SK-N-SH (cell line): ENCODE measurements at regions of chr11 and their contacts with region 1.

Region 1: GRCh38 chr11:111586388-111586831 is 15.8 kb upstream of the SIK2 start:
- DNase-seq: peak; percentile 27
- H3K4me3 ChIP-seq: no peak overlapping the region
- H3K27ac ChIP-seq: no peak overlapping the region
- H3K4me1 ChIP-seq: peaks cover 5 to 14% of the 10 kb centered on the region in 2 experiments; a peak in 3 of 4 replicates
- H3K27me3 ChIP-seq: no peaks in the 10 kb centered on the region
- CTCF ChIP-seq: peak; percentile 74
- EP300 ChIP-seq: no peak
- RAD21 ChIP-seq: peak; percentile 78

Region 2: DNA sequence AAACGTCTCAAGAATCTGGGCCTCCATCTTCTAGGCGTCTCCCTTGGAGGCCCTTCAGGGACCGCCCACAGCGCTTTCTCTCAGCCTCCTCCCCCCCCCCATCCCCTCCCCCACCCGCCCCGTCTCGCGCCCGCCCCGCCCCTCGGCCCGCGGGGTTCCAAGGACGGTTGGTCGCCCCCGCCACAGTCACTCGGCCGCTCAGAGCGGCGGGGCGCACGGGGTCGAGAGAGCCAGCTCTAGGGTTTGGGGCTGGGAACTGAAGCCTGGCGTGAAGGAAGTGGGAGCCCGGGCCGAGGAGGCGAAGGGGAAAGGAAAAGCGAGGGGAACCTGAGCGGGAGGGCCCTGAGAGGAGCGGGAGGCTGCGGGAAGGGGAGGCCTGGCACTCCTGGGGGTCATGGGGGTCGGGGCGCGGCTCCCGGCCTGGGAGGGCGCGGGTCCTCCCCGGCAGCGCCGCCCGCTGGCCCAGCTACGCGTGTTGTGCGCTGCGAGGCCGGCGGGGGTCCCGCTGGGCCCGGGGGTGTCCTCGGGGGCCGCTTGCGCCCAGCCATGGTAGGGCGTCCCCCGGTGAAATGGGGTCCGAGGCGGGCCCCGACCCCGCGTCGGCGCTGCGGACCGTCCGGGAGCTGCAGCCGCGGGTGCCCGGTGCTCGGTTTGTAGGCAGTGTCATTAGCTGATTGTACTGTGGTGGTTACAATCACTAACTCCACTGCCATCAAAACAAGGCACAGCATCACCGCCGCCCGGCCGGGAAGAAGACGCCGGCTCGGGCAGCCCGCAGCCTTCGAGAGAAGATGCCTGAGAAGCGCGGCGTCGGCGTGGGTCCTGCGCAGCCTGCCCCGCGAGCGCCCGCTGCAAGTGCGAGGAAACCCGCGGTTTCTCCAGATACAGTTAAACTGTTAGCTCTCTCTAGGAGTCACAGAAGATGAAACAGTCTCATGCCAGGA is 73.8 kb before region 1 on chr11 and contains the start of gene BTG4:
- CTCF ChIA-PET with region 1: no interaction called
- POLR2A ChIA-PET with region 1: no interaction called
- DNase-seq: peak; percentile 68
- H3K4me3 ChIP-seq: peak within 1 kb of the TSS in 1 of 2 experiments; percentile 39; a peak in 3 of 4 replicates
- H3K27ac ChIP-seq: no peak within 1 kb of the TSS
- H3K4me1 ChIP-seq: peaks cover 11 to 15% of the 10 kb centered on the region in 2 experiments; a peak in 3 of 4 replicates
- H3K27me3 ChIP-seq: no peaks in the 10 kb centered on the region
- CTCF ChIP-seq: no peak
- EP300 ChIP-seq: no peak
- RAD21 ChIP-seq: no peak
- polyA plus RNA-seq, gene BTG4: 0.26 and 0.34 TPM in 2 replicates

Region 3: DNA sequence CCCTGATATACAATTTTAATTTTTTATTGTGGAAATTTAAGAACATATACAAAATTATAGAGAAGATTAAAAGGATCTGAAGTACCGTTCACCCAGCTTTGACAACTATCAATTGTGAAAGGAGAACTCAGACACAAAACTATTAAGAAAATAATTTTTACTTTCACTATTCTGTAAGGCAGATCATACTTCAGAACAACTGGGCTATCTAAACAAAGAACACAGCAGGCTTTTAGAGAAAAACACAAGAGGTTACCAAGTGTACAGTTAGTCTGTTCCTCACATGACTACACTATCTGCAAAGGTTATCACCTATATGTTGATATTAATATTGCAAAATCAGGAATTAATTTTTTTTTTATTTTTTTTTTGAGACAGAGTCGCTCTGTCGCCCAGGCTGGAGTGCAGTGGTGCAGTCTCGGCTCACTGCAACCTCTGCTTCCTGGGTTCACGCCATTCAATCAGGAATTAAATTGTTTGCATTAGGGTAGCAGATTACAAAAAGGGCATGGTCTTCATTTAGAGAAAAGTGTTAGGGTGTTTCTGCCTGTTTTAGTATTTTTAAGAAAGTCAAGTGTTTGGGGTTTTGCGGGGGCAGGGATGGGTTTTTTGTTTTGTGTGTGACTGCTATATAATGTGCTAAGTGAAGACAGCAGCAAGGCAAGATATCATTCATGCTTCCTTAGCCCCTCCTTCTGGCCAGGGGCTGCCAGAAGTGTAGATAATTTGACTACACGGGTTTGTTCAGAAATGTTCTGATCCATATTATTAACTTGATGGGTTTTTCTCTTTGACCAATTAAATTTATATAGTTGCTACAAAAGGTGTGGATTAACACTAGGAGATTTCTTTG is 11.8 kb before region 1 on chr11:
- CTCF ChIA-PET with region 1: interaction called, 12 read pairs
- POLR2A ChIA-PET with region 1: no interaction called
- DNase-seq: no peak
- H3K4me3 ChIP-seq: no peak overlapping the region
- H3K27ac ChIP-seq: no peak overlapping the region
- H3K4me1 ChIP-seq: peaks cover 3 to 19% of the 10 kb centered on the region in 2 experiments; a peak in 3 of 4 replicates
- H3K27me3 ChIP-seq: no peaks in the 10 kb centered on the region
- CTCF ChIP-seq: no peak
- EP300 ChIP-seq: no peak
- RAD21 ChIP-seq: no peak

Region 4: GRCh38 chr11:111718436-111718835 is 132.0 kb after region 1 on chr11:
- CTCF ChIA-PET with region 1: no interaction called
- POLR2A ChIA-PET with region 1: no interaction called
- DNase-seq: no peak
- H3K4me3 ChIP-seq: no peak overlapping the region
- H3K27ac ChIP-seq: peak overlapping the region in 1 of 2 experiments; percentile 41; a peak in 2 of 4 replicates
- H3K4me1 ChIP-seq: peaks cover 18 to 24% of the 10 kb centered on the region in 2 experiments; a peak in 2 of 4 replicates
- H3K27me3 ChIP-seq: no peaks in the 10 kb centered on the region
- CTCF ChIP-seq: no peak
- EP300 ChIP-seq: no peak
- RAD21 ChIP-seq: no peak

Region 5: DNA sequence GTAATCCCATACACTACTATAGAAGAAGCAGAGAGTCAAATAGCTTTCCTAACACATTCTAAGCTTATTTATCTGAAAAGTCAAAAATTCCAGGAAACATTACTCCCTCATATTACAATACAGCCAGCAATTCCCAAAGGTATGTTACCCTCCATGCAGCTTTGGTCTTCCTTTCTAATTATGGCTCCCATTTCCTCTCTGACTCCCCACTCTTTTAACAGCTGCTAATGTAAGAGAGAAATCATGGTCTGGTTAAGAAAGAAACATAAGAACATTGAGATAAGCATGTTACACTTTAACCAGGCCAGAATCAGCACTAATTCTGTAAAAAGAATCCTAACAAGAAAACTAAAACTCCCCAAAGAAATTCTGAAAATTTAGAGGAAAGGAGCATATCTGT is 173.0 kb after region 1 on chr11:
- CTCF ChIA-PET with region 1: no interaction called
- POLR2A ChIA-PET with region 1: no interaction called
- DNase-seq: no peak
- H3K4me3 ChIP-seq: no peak overlapping the region
- H3K27ac ChIP-seq: no peak overlapping the region
- H3K4me1 ChIP-seq: no peaks in the 10 kb centered on the region; a peak in 1 of 4 replicates
- H3K27me3 ChIP-seq: no peaks in the 10 kb centered on the region
- CTCF ChIP-seq: no peak
- EP300 ChIP-seq: no peak
- RAD21 ChIP-seq: no peak

Region 6: GRCh38 chr11:111797145-111797581 is 210.8 kb after region 1 on chr11:
- CTCF ChIA-PET with region 1: interaction called, 11 read pairs
- POLR2A ChIA-PET with region 1: no interaction called
- DNase-seq: no peak
- H3K4me3 ChIP-seq: no peak overlapping the region
- H3K27ac ChIP-seq: peak overlapping the region; percentile 28 to 35; a peak in 3 of 4 replicates
- H3K4me1 ChIP-seq: peaks cover 18 to 26% of the 10 kb centered on the region in 2 experiments; a peak in 3 of 4 replicates
- H3K27me3 ChIP-seq: no peaks in the 10 kb centered on the region
- CTCF ChIP-seq: no peak
- EP300 ChIP-seq: no peak
- RAD21 ChIP-seq: no peak

Region 7: DNA sequence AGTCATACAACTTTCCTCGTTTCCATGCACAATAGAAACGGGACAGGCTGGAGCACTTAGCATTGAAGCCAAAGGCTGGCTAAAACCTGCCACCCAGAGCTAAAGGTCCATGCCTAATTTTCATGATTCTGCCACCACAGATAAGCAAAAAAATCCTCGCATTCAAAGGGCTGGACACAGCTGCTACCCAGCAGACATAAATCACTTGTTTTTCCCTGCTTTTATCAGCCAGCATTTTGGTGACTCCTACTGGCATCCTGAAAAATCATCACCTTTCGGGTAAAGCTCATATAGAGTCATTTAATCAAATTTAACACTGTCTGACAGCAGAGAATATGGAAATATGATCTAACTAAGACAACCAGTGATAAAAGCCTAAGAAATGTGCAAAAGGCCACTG is 247.1 kb after region 1 on chr11:
- CTCF ChIA-PET with region 1: interaction called, 20 read pairs
- POLR2A ChIA-PET with region 1: no interaction called
- DNase-seq: no peak
- H3K4me3 ChIP-seq: no peak overlapping the region
- H3K27ac ChIP-seq: no peak overlapping the region; a peak in 1 of 4 replicates
- H3K4me1 ChIP-seq: peaks cover 6 to 13% of the 10 kb centered on the region in 2 experiments; a peak in 3 of 4 replicates
- H3K27me3 ChIP-seq: no peaks in the 10 kb centered on the region
- CTCF ChIP-seq: peak; percentile 33
- EP300 ChIP-seq: no peak
- RAD21 ChIP-seq: peak; percentile 70

Region 8: DNA sequence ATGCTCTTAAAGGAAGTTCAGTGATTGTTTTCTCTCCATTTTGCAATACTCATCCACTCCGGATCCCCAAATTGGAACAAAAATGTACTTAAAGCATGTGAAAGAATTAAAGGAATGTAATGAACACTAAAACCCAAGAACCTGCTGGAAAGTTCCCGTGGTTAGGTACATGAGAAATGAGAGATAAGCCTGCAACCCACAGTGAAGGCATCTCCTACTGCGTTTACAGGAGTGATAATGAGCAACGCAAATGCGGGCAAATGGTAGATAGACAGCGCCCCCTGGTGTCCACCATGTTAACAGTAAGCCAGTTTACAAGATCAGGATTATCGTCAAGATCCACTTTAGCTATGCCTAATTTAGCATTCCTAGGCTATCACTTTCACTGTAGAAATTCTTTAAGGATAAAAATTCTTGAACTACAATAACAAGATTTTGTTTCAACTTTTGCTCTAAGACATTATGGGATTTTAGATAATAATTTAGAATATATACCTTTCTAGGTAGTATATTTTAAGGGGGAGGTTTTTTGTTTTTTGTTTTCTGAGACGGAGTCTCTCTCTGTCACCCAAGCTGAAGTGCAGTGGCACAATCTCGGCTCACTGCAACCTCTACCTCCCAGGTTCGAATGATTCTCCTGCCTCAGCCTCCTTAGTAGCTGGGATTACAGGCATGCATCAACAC is 255.1 kb after region 1 on chr11:
- CTCF ChIA-PET with region 1: interaction called, 30 read pairs
- POLR2A ChIA-PET with region 1: no interaction called
- DNase-seq: peak; percentile 73
- H3K4me3 ChIP-seq: no peak overlapping the region
- H3K27ac ChIP-seq: peak overlapping the region; percentile 28 to 43; a peak in 2 of 4 replicates
- H3K4me1 ChIP-seq: peaks cover 3 to 7% of the 10 kb centered on the region in 2 experiments
- H3K27me3 ChIP-seq: no peaks in the 10 kb centered on the region
- CTCF ChIP-seq: peak; percentile 95
- EP300 ChIP-seq: no peak
- RAD21 ChIP-seq: peak; percentile 96

Region 9: GRCh38 chr11:111846636-111847035 is 260.2 kb after region 1 on chr11:
- CTCF ChIA-PET with region 1: interaction called, 30 read pairs
- POLR2A ChIA-PET with region 1: no interaction called
- DNase-seq: no peak
- H3K4me3 ChIP-seq: no peak overlapping the region
- H3K27ac ChIP-seq: peak overlapping the region; percentile 76 to 94; a peak in 3 of 4 replicates
- H3K4me1 ChIP-seq: peaks cover 6 to 21% of the 10 kb centered on the region in 2 experiments
- H3K27me3 ChIP-seq: no peaks in the 10 kb centered on the region
- CTCF ChIP-seq: no peak
- EP300 ChIP-seq: no peak
- RAD21 ChIP-seq: no peak